ENCODE measurements at regions of chr10 and their contacts with region 1.

Region 1: GRCh38 chr10:95133016-95133752 is 60.9 kb upstream of the ACSM6 start:
- DNase-seq: peak; percentile 73
- ATAC-seq: peak; percentile 82
- H3K4me3 ChIP-seq: no peak overlapping the region
- H3K27ac ChIP-seq: no peak overlapping the region
- H3K4me1 ChIP-seq: no peaks in the 10 kb centered on the region
- H3K27me3 ChIP-seq: no peaks in the 10 kb centered on the region
- CTCF ChIP-seq: peak; percentile 80
- POLR2A ChIP-seq: no peak
- RAD21 ChIP-seq: peak; percentile 92

Region 2: GRCh38 chr10:94362360-94363250 is 770.6 kb before region 1 on chr10 and contains the start of gene NOC3L:
- CTCF ChIA-PET with region 1: no interaction called
- POLR2A ChIA-PET with region 1: no interaction called
- dilution Hi-C with region 1: no loop called
- in situ Hi-C with region 1: no loop called
- intact Hi-C with region 1: no loop called
- DNase-seq: peak; percentile 96
- ATAC-seq: peak; percentile 97
- H3K4me3 ChIP-seq: peak within 1 kb of the TSS; percentile 64
- H3K27ac ChIP-seq: peak within 1 kb of the TSS; percentile 56
- H3K4me1 ChIP-seq: peaks cover 2% of the 10 kb centered on the region
- H3K27me3 ChIP-seq: no peaks in the 10 kb centered on the region; the same call in 1 of the 2 replicates
- CTCF ChIP-seq: peak; percentile 99
- POLR2A ChIP-seq: peak; percentile 89
- RAD21 ChIP-seq: peak; percentile 51
- total RNA-seq, gene NOC3L: 26.5 and 40.5 TPM in 2 replicates

Region 3: GRCh38 chr10:95097805-95098204 is 35.4 kb before region 1 on chr10:
- CTCF ChIA-PET with region 1: no interaction called
- POLR2A ChIA-PET with region 1: no interaction called
- dilution Hi-C with region 1: no loop called
- in situ Hi-C with region 1: no loop called
- intact Hi-C with region 1: no loop called
- DNase-seq: no peak
- ATAC-seq: no peak
- H3K4me3 ChIP-seq: no peak overlapping the region
- H3K27ac ChIP-seq: no peak overlapping the region
- H3K4me1 ChIP-seq: no peaks in the 10 kb centered on the region
- H3K27me3 ChIP-seq: no peaks in the 10 kb centered on the region
- CTCF ChIP-seq: no peak
- POLR2A ChIP-seq: no peak
- RAD21 ChIP-seq: no peak

Region 4: GRCh38 chr10:95183271-95184230 is 50.4 kb after region 1 on chr10:
- CTCF ChIA-PET with region 1: no interaction called
- POLR2A ChIA-PET with region 1: no interaction called
- dilution Hi-C with region 1: no loop called
- in situ Hi-C with region 1: no loop called
- intact Hi-C with region 1: loop called (anchors 5 kb)
- DNase-seq: peak; percentile 71
- ATAC-seq: peak; percentile 98
- H3K4me3 ChIP-seq: peak overlapping the region; percentile 65
- H3K27ac ChIP-seq: peak overlapping the region; percentile 48; the same call in 1 of the 2 replicates
- H3K4me1 ChIP-seq: no peaks in the 10 kb centered on the region
- H3K27me3 ChIP-seq: peaks cover 2% of the 10 kb centered on the region
- CTCF ChIP-seq: peak; percentile 94
- POLR2A ChIP-seq: no peak
- RAD21 ChIP-seq: peak; percentile 76

Region 5: GRCh38 chr10:95246579-95247051 is 113.4 kb after region 1 on chr10:
- CTCF ChIA-PET with region 1: interaction called, 6 read pairs
- POLR2A ChIA-PET with region 1: no interaction called
- dilution Hi-C with region 1: no loop called
- in situ Hi-C with region 1: no loop called
- intact Hi-C with region 1: loop called (anchors 1 kb)
- DNase-seq: peak; percentile 81
- ATAC-seq: peak; percentile 52
- H3K4me3 ChIP-seq: no peak overlapping the region
- H3K27ac ChIP-seq: peak overlapping the region; percentile 86
- H3K4me1 ChIP-seq: peaks cover 30% of the 10 kb centered on the region
- H3K27me3 ChIP-seq: no peaks in the 10 kb centered on the region
- CTCF ChIP-seq: peak; percentile 77
- POLR2A ChIP-seq: 0 out of 2 replicates have a peak, but pooled peaks have one; percentile 39
- RAD21 ChIP-seq: peak; percentile 90

Region 6: DNA sequence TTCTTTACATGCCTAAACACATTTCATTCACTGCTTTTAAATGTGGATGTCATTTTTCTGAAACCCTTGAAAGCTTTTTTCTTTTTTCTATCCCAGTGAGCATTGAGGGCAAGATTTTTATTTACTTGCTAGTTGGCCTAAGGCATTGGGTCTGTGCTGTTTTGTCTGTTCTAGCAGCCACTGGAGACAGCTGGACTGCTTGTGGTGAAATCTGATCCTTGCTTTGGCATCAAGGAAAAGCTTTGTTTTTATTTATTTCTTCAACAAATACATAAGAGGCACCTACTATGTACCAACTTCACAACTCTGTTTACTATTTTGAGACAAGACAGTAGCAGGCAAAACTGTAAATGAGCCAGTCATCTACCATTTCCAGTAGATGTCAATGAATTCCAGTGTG is 186.1 kb after region 1 on chr10:
- CTCF ChIA-PET with region 1: no interaction called
- POLR2A ChIA-PET with region 1: no interaction called
- dilution Hi-C with region 1: no loop called
- in situ Hi-C with region 1: no loop called
- intact Hi-C with region 1: no loop called
- DNase-seq: peak; percentile 33
- ATAC-seq: peak; percentile 74
- H3K4me3 ChIP-seq: no peak overlapping the region
- H3K27ac ChIP-seq: no peak overlapping the region
- H3K4me1 ChIP-seq: peaks cover 9% of the 10 kb centered on the region
- H3K27me3 ChIP-seq: peaks cover 2% of the 10 kb centered on the region; the same call in 1 of the 2 replicates
- CTCF ChIP-seq: no peak
- POLR2A ChIP-seq: no peak
- RAD21 ChIP-seq: no peak

Region 7: DNA sequence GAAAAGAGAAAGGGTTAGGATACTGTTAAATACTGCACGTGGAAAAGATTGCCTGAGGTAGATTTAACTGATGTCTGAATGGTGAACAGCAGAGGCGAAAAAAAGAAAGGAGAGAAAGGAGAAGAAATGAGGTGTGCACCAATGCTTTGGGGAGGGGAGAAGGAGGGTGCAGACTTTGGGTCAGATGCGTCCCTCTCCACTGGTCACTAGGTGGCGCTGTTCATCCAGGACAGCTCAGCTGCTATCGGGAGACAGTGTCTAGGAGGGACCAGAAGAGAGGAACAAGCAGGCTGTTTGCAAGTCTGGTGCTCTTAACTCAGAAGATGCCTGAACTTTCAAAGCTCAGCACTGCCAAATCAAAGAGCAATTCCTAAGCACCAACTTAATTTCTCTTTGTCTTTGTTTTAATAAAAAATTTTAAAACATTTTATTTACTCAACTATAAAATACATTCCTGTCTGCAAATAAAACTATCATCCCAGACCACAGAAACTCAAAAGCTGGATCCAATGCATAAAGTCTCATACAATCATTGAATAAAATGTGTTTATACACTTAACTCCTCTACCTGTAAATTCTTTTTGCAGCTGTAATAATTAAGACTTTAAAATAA is 241.5 kb after region 1 on chr10:
- CTCF ChIA-PET with region 1: no interaction called
- POLR2A ChIA-PET with region 1: no interaction called
- dilution Hi-C with region 1: no loop called
- in situ Hi-C with region 1: loop called (anchors 5 kb)
- intact Hi-C with region 1: no loop called
- DNase-seq: peak; percentile 57
- ATAC-seq: peak; percentile 84; the same call in 1 of the 2 replicates
- H3K4me3 ChIP-seq: no peak overlapping the region
- H3K27ac ChIP-seq: no peak overlapping the region
- H3K4me1 ChIP-seq: no peaks in the 10 kb centered on the region
- H3K27me3 ChIP-seq: peaks cover 30% of the 10 kb centered on the region
- CTCF ChIP-seq: peak; percentile 63
- POLR2A ChIP-seq: no peak
- RAD21 ChIP-seq: peak; percentile 67

Region 8: GRCh38 chr10:95445837-95446486 is 312.8 kb after region 1 on chr10:
- CTCF ChIA-PET with region 1: no interaction called
- POLR2A ChIA-PET with region 1: no interaction called
- dilution Hi-C with region 1: no loop called
- in situ Hi-C with region 1: no loop called
- intact Hi-C with region 1: loop called (anchors 5 kb)
- DNase-seq: peak; percentile 69
- ATAC-seq: peak; percentile 81
- H3K4me3 ChIP-seq: no peak overlapping the region
- H3K27ac ChIP-seq: no peak overlapping the region
- H3K4me1 ChIP-seq: peaks cover 3% of the 10 kb centered on the region
- H3K27me3 ChIP-seq: peaks cover 8% of the 10 kb centered on the region
- CTCF ChIP-seq: peak; percentile 64
- POLR2A ChIP-seq: no peak
- RAD21 ChIP-seq: peak; percentile 39; the same call in 1 of the 2 replicates

Measured in IMR-90 (cell line).